Gastrocnemius medialis (tissue), 4 donors: ENCODE measurements at regions of chr21 and their contacts with region 1.

Region 1: DNA sequence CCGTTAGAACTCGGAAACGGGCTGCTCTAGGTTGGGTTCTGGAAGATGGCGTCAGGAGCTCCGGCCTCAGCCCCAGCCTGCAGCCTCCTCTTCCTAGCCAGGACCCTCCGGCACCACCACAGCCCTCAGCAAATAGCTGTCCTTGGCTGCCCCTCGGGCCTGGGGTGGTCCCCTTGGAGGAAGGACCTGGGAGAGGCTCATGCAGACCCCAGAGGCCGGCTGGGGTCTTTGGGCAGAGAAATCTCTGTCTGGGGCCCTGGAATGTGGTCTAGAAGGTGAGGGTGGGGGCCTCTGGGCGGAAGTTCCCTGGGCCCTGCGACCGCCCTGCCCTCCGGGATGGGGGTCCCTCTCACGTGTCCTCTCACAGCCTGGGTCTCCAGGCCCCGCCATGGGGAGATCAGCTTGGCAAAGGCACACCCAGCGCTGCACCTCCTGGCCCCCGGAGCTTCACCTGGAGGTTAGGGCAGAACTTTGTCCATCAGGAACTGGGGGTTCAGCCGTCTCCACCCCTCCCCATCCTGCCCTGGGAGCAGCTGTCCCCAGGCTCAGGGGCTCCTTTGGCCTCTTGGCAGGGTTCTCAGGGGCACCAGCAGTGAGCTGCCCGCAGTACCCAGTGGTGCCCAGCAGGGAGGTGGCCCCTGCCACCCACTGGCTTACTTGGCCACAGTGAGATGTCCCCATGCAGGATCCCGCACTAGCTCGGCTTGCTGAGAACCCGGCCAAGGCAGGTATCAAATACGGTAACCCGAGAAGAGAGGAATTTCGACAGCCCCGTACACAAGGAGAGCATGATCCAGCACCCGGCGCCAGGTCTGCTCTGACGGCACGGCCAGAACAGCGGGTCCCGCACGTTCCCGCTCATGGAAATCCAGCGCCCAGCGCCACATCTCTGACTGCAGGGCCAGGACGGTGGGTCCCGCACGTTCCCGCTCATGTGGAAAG is 36.6 kb downstream of the RRP1 start:
- DNase-seq: peak; percentile 91 to 96
- ATAC-seq: peak; percentile 88 to 91
- H3K4me3 ChIP-seq: peak overlapping the region in 2 of 4 donors; percentile 33 to 38
- H3K27ac ChIP-seq: peak overlapping the region; percentile 84 to 93 (median 91)
- H3K4me1 ChIP-seq: peaks cover 25 to 26% of the 10 kb centered on the region in 2 donors
- H3K27me3 ChIP-seq: peaks cover 0 to 5% (median 0%) of the 10 kb centered on the region in 3 donors
- CTCF ChIP-seq: peak; percentile 70 to 87 (median 82)
- POLR2A ChIP-seq: peak; percentile 34 to 52

Region 2: GRCh38 chr21:43624339-43624738 is 201.6 kb before region 1 on chr21:
- in situ Hi-C with region 1: no loop called
- intact Hi-C with region 1: no loop called
- DNase-seq: no peak
- ATAC-seq: no peak
- H3K4me3 ChIP-seq: no peak overlapping the region
- H3K27ac ChIP-seq: no peak overlapping the region
- H3K4me1 ChIP-seq: no peaks in the 10 kb centered on the region
- H3K27me3 ChIP-seq: no peaks in the 10 kb centered on the region
- CTCF ChIP-seq: no peak
- POLR2A ChIP-seq: no peak

Region 3: DNA sequence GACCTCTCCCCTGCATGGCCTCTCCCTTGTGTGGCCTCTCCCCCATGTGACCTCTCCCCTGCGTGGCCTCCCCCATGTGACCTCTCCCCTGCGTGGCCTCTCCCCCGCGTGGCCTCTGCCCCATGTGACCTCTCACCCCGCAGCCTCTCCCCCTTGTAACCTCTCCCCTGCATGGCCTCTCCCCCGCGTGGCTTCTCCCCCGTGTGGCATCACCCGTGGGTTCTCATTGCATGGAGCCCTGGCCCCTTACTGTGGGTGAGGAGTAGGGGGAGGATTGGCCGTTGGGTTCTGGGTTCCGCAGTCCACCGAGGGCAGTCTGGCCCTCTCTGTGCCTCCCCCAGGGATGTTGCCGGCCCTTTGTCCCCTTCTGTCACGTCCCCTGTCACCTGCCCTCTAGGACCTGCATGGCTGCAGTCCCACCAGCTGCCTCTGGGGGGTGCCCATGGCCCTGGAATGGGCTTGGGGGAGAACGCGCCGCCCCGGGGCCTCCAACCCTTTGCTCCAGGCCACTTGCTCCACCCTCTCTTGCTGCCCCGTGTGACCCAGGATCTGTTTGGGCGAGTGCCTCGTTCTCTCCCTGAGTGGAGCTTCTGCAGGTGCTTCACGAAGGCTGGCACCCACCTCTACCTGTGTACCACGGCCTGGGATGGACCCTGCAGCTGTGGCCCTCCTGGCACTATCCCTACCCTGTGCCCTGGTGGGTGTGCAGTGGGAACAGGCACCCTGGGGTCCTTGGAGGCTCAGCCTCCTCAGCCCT is 15.3 kb before region 1 on chr21:
- in situ Hi-C with region 1: no loop called
- intact Hi-C with region 1: loop called (anchors 1 kb)
- DNase-seq: peak; percentile 72 to 89
- ATAC-seq: peak; percentile 75 to 80
- H3K4me3 ChIP-seq: peak overlapping the region in 2 of 4 donors; percentile 11 to 18
- H3K27ac ChIP-seq: peak overlapping the region in 2 of 4 donors; percentile 50
- H3K4me1 ChIP-seq: peaks cover 21% of the 10 kb centered on the region in 2 donors
- H3K27me3 ChIP-seq: no peaks in the 10 kb centered on the region
- CTCF ChIP-seq: peak; percentile 93 to 99 (median 97)
- POLR2A ChIP-seq: no peak

Region 4: GRCh38 chr21:43874085-43874785 is 48.3 kb after region 1 on chr21:
- in situ Hi-C with region 1: no loop called
- intact Hi-C with region 1: no loop called
- DNase-seq: peak in 1 of 2 donors; percentile 58
- ATAC-seq: peak in 1 of 2 donors; percentile 42
- H3K4me3 ChIP-seq: no peak overlapping the region
- H3K27ac ChIP-seq: peak overlapping the region; percentile 16 to 59 (median 43)
- H3K4me1 ChIP-seq: peaks cover 28 to 46% of the 10 kb centered on the region in 2 donors
- H3K27me3 ChIP-seq: no peaks in the 10 kb centered on the region
- CTCF ChIP-seq: no peak
- POLR2A ChIP-seq: no peak

Region 5: GRCh38 chr21:43913928-43914327 is 88.0 kb after region 1 on chr21:
- in situ Hi-C with region 1: no loop called
- intact Hi-C with region 1: loop called (anchors 5 kb)
- DNase-seq: no peak
- ATAC-seq: peak; percentile 20 to 34
- H3K4me3 ChIP-seq: no peak overlapping the region
- H3K27ac ChIP-seq: peak overlapping the region; percentile 65 to 78 (median 76)
- H3K4me1 ChIP-seq: peaks cover 50 to 60% of the 10 kb centered on the region in 2 donors
- H3K27me3 ChIP-seq: no peaks in the 10 kb centered on the region
- CTCF ChIP-seq: no peak
- POLR2A ChIP-seq: no peak

Region 6: GRCh38 chr21:43929217-43930025 is 103.5 kb after region 1 on chr21:
- in situ Hi-C with region 1: loop called in 1 of 4 experiments (anchors 25 kb)
- intact Hi-C with region 1: loop called (anchors 5 kb)
- DNase-seq: peak; percentile 91 to 96
- ATAC-seq: peak; percentile 67 to 69
- H3K4me3 ChIP-seq: peak overlapping the region in 3 of 4 donors; percentile 25 to 29 (median 29)
- H3K27ac ChIP-seq: peak overlapping the region; percentile 94 to 98 (median 96)
- H3K4me1 ChIP-seq: peaks cover 50 to 81% of the 10 kb centered on the region in 2 donors
- H3K27me3 ChIP-seq: no peaks in the 10 kb centered on the region
- CTCF ChIP-seq: peak; percentile 41 to 58 (median 48)
- POLR2A ChIP-seq: peak; percentile 37 to 51

Region 7: GRCh38 chr21:43938751-43939442 is 112.9 kb after region 1 on chr21:
- in situ Hi-C with region 1: loop called in 1 of 4 experiments (anchors 25 kb)
- intact Hi-C with region 1: no loop called
- DNase-seq: peak; percentile 61 to 82
- ATAC-seq: peak; percentile 68 to 70
- H3K4me3 ChIP-seq: peak overlapping the region; percentile 43 to 50 (median 47)
- H3K27ac ChIP-seq: peak overlapping the region; percentile 70 to 98 (median 85)
- H3K4me1 ChIP-seq: peaks cover 33 to 56% of the 10 kb centered on the region in 2 donors
- H3K27me3 ChIP-seq: no peaks in the 10 kb centered on the region
- CTCF ChIP-seq: peak; percentile 91 to 97 (median 94)
- POLR2A ChIP-seq: peak in 1 of 2 donors; percentile 33

Region 8: DNA sequence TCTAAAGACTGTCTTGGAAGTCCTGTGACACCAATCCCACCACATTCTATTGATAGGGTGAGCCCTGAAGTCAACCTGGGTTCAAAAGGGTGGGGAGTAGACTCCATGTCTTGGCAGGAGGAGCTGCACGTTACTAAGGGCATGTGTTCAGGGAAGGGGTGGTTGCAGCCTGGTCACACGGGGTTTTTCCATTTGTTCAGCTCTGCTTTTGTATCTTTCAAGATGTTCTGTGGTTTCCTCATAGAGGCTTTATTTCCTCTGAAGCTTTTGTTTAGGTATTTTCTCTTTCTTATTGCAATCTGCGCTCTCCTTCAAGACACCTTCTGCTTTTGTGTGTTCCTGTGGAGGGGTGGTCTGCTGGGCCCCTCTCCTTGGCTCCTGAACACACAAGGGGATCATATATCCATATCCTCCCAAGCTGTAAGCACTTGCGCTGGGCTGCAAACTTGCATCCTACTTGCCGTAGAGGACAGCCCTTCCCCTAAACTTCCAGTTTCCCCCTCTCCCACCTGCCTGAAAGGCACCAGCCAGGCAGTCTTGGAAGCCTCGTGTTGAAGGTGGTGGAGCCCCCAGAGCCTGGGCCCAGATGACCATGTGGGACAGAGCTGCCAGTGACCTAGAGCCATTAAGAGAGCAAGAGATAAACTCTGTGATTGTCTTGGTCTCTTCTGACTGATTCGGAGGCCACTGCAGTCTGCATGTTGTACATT is 123.7 kb after region 1 on chr21:
- in situ Hi-C with region 1: loop called in 1 of 4 experiments (anchors 25 kb)
- intact Hi-C with region 1: loop called (anchors 5 kb)
- DNase-seq: no peak
- ATAC-seq: no peak
- H3K4me3 ChIP-seq: no peak overlapping the region
- H3K27ac ChIP-seq: peak overlapping the region in 2 of 4 donors; percentile 16 to 19
- H3K4me1 ChIP-seq: peaks cover 23% of the 10 kb centered on the region in 2 donors
- H3K27me3 ChIP-seq: no peaks in the 10 kb centered on the region
- CTCF ChIP-seq: no peak
- POLR2A ChIP-seq: no peak